ENCODE measurements at regions of chr1 and their contacts with region 1.

Region 1: GRCh38 chr1:23664837-23665795 is 26.5 kb upstream of the RPL11 start:
- DNase-seq: no peak
- ATAC-seq: no peak
- H3K4me3 ChIP-seq: no peak overlapping the region
- H3K27ac ChIP-seq: no peak overlapping the region
- H3K4me1 ChIP-seq: no peaks in the 10 kb centered on the region
- H3K27me3 ChIP-seq: peaks cover 12% of the 10 kb centered on the region
- CTCF ChIP-seq: peak; percentile 40
- POLR2A ChIP-seq: no peak
- RAD21 ChIP-seq: peak; percentile 43

Region 2: GRCh38 chr1:23496490-23497181 is 168.5 kb before region 1 on chr1:
- CTCF ChIA-PET with region 1: no interaction called
- POLR2A ChIA-PET with region 1: no interaction called
- dilution Hi-C with region 1: no loop called
- in situ Hi-C with region 1: no loop called
- intact Hi-C with region 1: loop called (anchors 5 kb)
- DNase-seq: no peak
- ATAC-seq: no peak
- H3K4me3 ChIP-seq: no peak overlapping the region
- H3K27ac ChIP-seq: no peak overlapping the region
- H3K4me1 ChIP-seq: no peaks in the 10 kb centered on the region
- H3K27me3 ChIP-seq: peaks cover 2% of the 10 kb centered on the region
- CTCF ChIP-seq: no peak
- POLR2A ChIP-seq: no peak
- RAD21 ChIP-seq: no peak

Measured in IMR-90 (cell line).